CD4-positive, alpha-beta T cell (primary cell): ENCODE measurements at regions of chr1 and their contacts with region 1.

Region 1: DNA sequence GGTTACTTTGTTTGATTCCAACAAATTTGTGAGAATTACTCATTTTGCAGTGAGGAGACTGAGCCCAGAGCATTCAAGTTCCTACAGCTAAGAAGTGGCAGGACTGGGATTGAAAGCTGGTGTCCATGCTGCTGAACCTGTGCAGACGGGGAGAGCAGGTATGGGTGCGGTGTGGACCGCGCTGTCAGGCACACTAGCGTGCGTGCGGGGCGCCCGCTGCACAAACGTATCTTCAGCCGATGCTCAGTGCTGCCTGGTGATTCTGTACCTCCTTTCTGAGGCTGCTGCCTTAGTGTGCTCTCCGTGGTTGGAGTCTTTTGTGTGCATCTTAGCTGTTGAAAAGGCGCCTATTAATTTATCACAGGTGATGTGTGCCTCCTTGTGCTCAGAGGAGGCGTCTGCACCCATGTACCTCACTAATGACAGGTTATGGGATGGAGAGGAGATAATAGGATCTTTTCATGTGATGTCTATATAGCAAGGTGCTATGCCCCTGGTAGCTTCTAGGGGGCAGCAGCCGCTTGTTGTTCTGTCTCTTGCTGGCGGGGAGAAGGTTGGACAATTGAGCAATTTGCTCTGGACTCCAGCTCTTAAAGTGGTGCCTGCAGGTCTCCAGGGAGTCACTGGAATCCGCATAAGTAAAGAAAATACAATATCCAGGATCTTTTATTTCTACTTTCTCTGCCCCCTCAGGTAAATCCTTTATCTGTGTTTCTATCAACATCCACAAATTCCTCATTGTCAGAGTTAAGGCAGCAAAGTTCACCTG is 32.5 kb downstream of the PEX14 start:
- DNase-seq: peak; percentile 37 to 76 (median 50)
- ATAC-seq: peak; percentile 76
- H3K4me3 ChIP-seq: no peak overlapping the region
- H3K4me3 Mint-ChIP-seq: peak overlapping the region; percentile 0
- H3K27ac ChIP-seq: no peak overlapping the region
- H3K27ac Mint-ChIP-seq: peak overlapping the region; percentile 64
- H3K4me1 ChIP-seq: peaks cover 43% of the 10 kb centered on the region
- H3K4me1 Mint-ChIP-seq: peaks cover 58% of the 10 kb centered on the region
- H3K27me3 ChIP-seq: no peaks in the 10 kb centered on the region
- H3K27me3 Mint-ChIP-seq: no peaks in the 10 kb centered on the region
- CTCF ChIP-seq: peak; percentile 79

Region 2: GRCh38 chr1:10635085-10635896 is 128.0 kb after region 1 on chr1:
- CTCF ChIA-PET with region 1: no interaction called
- POLR2A ChIA-PET with region 1: interaction called, 3 read pairs
- intact Hi-C with region 1: loop called (anchors 5 to 10 kb)
- DNase-seq: no peak
- ATAC-seq: no peak
- H3K4me3 ChIP-seq: no peak overlapping the region
- H3K4me3 Mint-ChIP-seq: no peak overlapping the region
- H3K27ac ChIP-seq: no peak overlapping the region
- H3K27ac Mint-ChIP-seq: no peak overlapping the region
- H3K4me1 ChIP-seq: peaks cover 6% of the 10 kb centered on the region
- H3K4me1 Mint-ChIP-seq: no peaks in the 10 kb centered on the region
- H3K27me3 ChIP-seq: no peaks in the 10 kb centered on the region
- H3K27me3 Mint-ChIP-seq: no peaks in the 10 kb centered on the region
- CTCF ChIP-seq: no peak

Region 3: DNA sequence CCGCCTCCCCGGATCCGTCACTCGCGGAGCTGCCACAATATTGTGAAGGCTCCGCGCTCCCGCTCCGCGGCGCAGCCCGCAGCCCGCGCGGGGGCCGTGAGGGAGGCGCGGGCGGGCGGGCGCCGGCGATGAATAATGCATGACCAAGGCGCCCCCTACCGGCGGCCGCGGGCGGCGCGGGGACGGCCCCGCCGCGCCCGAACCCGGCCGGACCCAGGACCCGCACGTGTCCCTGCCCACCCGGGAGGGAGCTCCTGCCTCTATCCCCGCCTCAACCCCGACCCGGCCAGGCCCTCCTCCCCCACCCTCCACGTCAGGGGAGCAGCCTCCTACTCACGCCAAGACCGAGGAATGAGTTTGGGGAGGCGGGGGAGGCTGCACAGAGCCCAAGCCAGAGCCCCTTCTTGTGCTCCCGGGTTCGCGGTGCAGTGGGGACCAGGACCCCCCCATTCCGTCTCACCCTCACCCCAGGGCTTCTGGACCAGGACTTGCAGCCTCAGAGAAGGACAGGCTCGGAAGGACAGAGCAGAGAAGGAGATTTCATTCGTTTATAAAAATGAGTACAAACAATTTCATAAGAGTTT is 359.9 kb after region 1 on chr1:
- CTCF ChIA-PET with region 1: interaction called, 3 read pairs
- POLR2A ChIA-PET with region 1: interaction called, 3 read pairs
- intact Hi-C with region 1: loop called in 1 of 2 experiments (anchors 5 kb)
- DNase-seq: peak; percentile 39 to 82 (median 59)
- ATAC-seq: peak; percentile 85
- H3K4me3 ChIP-seq: peak overlapping the region; percentile 29
- H3K4me3 Mint-ChIP-seq: peak overlapping the region; percentile 6
- H3K27ac ChIP-seq: no peak overlapping the region
- H3K27ac Mint-ChIP-seq: no peak overlapping the region
- H3K4me1 ChIP-seq: peaks cover 16% of the 10 kb centered on the region
- H3K4me1 Mint-ChIP-seq: peaks cover 25% of the 10 kb centered on the region
- H3K27me3 ChIP-seq: peaks cover 40 to 41% of the 10 kb centered on the region in 2 experiments
- H3K27me3 Mint-ChIP-seq: peaks cover 71% of the 10 kb centered on the region
- CTCF ChIP-seq: peak; percentile 48

Region 4: DNA sequence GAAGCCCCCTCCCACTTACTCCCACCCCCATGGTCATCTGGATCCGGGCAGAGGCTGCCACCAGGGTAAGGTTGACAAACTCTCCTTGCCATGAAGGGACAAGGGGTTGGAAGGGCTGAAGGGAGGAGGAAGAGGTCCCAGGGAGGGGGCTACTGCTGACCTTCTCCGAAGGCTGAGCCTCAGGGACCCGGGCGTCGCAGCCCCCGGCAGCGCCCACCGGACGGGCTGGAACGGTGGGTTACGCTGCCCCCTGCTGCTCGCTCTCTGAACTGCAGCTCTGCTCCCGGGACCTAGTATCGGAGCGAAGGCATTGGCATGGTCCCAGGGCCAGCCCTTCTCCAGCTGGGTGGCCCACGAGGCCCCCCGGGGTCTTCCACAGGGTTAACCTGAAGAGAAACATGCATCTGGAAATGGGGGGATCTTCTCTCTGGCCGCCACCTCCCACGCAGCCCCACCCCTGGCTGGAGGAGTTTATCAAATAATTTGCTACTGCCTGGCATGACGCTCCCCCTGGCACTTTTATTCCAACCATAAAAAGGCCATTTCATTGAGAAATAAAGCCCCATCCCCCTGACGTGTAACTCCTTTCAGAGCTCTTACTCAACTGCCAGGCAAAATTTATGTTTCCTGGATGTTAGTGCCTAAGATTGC is 434.7 kb after region 1 on chr1:
- CTCF ChIA-PET with region 1: interaction called, 7 read pairs
- POLR2A ChIA-PET with region 1: no interaction called
- intact Hi-C with region 1: loop called in 1 of 2 experiments (anchors 5 kb)
- DNase-seq: peak; percentile 38 to 78 (median 56)
- ATAC-seq: peak; percentile 71
- H3K4me3 ChIP-seq: no peak overlapping the region
- H3K4me3 Mint-ChIP-seq: peak overlapping the region; percentile 20
- H3K27ac ChIP-seq: no peak overlapping the region
- H3K27ac Mint-ChIP-seq: no peak overlapping the region
- H3K4me1 ChIP-seq: peaks cover 42% of the 10 kb centered on the region
- H3K4me1 Mint-ChIP-seq: peaks cover 34% of the 10 kb centered on the region
- H3K27me3 ChIP-seq: peaks cover 8 to 14% of the 10 kb centered on the region in 2 experiments
- H3K27me3 Mint-ChIP-seq: peaks cover 53% of the 10 kb centered on the region
- CTCF ChIP-seq: peak; percentile 91